ENCODE measurements at regions of chr5 and their contacts with region 1.

Region 1: GRCh38 chr5:55621229-55621628 is 86.5 kb upstream of the PLPP1 start:
- DNase-seq: no peak
- H3K4me3 ChIP-seq: no peak overlapping the region
- H3K4me3 Mint-ChIP-seq: no peak overlapping the region
- H3K27ac ChIP-seq: no peak overlapping the region
- H3K27ac Mint-ChIP-seq: no peak overlapping the region
- H3K4me1 ChIP-seq: no peaks in the 10 kb centered on the region
- H3K4me1 Mint-ChIP-seq: no peaks in the 10 kb centered on the region
- H3K27me3 ChIP-seq: no peaks in the 10 kb centered on the region
- H3K27me3 Mint-ChIP-seq: no peaks in the 10 kb centered on the region

Region 2: DNA sequence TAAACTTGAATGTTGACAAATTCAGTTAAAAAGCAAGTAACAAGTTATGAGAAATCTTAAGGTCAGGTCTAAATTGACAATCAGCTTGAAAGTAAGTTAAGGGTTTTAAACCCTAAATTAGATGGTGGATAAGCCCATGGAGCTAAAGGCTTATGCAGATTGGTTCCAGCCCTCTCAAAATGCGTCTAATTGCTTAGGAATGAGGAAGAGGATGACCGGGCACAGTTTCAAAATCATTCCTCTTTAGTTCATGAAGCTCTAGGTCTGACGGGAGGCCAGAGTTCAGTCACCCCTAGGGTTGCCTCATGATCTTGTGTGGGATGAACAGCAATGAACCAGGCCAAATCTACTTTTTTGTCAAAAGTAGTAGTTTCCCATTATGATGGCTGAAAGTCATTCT is 15.5 kb after region 1 on chr5:
- CTCF ChIA-PET with region 1: no interaction called
- POLR2A ChIA-PET with region 1: no interaction called
- DNase-seq: no peak
- H3K4me3 ChIP-seq: no peak overlapping the region
- H3K4me3 Mint-ChIP-seq: no peak overlapping the region
- H3K27ac ChIP-seq: no peak overlapping the region
- H3K27ac Mint-ChIP-seq: peak overlapping the region in 1 of 8 donors; percentile 32
- H3K4me1 ChIP-seq: peaks cover 7% of the 10 kb centered on the region
- H3K4me1 Mint-ChIP-seq: peaks cover 0 to 7% (median 5%) of the 10 kb centered on the region in 3 donors
- H3K27me3 ChIP-seq: no peaks in the 10 kb centered on the region
- H3K27me3 Mint-ChIP-seq: no peaks in the 10 kb centered on the region

Region 3: DNA sequence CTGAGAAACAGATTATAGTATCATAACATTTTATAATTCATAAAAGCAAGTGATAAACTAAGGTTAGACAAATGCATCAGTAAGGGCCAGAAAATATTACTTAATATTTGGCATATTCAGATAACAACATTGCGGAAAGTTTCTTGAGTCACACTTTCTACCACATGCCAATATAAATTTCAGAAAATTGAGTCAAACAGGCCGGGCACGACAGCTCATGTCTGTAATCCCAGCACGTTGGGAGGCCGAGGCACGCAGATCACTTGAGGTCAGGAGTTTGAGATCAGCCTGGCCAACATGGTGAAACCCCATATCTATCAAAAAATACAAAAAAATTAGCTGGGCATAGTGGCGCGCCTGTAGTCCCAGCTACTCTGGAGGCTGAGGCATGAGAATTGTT is 43.8 kb after region 1 on chr5:
- CTCF ChIA-PET with region 1: no interaction called
- POLR2A ChIA-PET with region 1: no interaction called
- DNase-seq: no peak
- H3K4me3 ChIP-seq: no peak overlapping the region
- H3K4me3 Mint-ChIP-seq: no peak overlapping the region
- H3K27ac ChIP-seq: no peak overlapping the region
- H3K27ac Mint-ChIP-seq: no peak overlapping the region
- H3K4me1 ChIP-seq: no peaks in the 10 kb centered on the region
- H3K4me1 Mint-ChIP-seq: no peaks in the 10 kb centered on the region
- H3K27me3 ChIP-seq: no peaks in the 10 kb centered on the region
- H3K27me3 Mint-ChIP-seq: no peaks in the 10 kb centered on the region

Region 4: GRCh38 chr5:55905251-55905650 is 284.0 kb after region 1 on chr5:
- CTCF ChIA-PET with region 1: no interaction called
- POLR2A ChIA-PET with region 1: interaction called, 12 read pairs
- DNase-seq: no peak
- H3K4me3 ChIP-seq: no peak overlapping the region
- H3K4me3 Mint-ChIP-seq: no peak overlapping the region
- H3K27ac ChIP-seq: no peak overlapping the region
- H3K27ac Mint-ChIP-seq: peak overlapping the region in 2 of 8 donors; percentile 26 to 84
- H3K4me1 ChIP-seq: peaks cover 13% of the 10 kb centered on the region
- H3K4me1 Mint-ChIP-seq: peaks cover 24 to 39% (median 31%) of the 10 kb centered on the region in 3 donors
- H3K27me3 ChIP-seq: no peaks in the 10 kb centered on the region
- H3K27me3 Mint-ChIP-seq: peaks cover 3 to 9% of the 10 kb centered on the region in 2 donors

Measured in CD8-positive, alpha-beta memory T cell (primary cell).